ENCODE measurements at regions of chr17 and their contacts with region 1.

Region 1: DNA sequence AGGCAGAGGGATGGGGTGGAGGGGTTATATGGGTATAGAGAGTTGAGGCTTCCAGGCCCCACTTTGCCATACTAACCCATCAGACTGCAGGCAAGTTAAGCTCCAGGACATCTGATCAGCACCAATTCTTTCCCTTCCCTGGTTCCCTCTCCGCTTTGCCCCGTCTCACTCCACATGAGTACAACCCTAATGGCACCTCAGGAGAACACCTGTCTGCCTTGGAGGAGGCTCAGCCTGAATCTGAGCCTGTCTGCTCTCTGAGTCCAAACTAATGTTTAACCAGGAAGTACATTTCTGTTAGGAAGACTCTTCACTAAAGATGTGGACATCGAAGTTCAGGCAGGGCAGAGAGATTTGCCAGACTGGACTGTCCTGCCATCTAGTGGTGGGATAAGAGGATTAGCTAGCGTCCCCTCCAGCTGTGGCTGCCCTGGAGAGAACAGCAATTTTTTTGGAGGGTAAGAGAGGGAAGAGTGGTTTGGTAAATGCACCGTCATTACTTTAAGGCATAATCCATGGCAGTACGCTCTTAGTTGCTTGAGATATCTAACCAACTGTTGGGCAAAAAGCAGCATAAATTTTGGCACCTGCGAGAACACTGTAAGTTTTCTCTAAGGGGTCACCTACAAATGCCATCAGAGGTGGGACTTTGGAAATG is 29.2 kb upstream of the LRRC75A start:
- DNase-seq: peak; percentile 84
- H3K4me3 ChIP-seq: no peak overlapping the region
- H3K27ac ChIP-seq: no peak overlapping the region
- H3K4me1 ChIP-seq: no peaks in the 10 kb centered on the region
- H3K27me3 ChIP-seq: no peaks in the 10 kb centered on the region
- CTCF ChIP-seq: peak; percentile 84

Region 2: DNA sequence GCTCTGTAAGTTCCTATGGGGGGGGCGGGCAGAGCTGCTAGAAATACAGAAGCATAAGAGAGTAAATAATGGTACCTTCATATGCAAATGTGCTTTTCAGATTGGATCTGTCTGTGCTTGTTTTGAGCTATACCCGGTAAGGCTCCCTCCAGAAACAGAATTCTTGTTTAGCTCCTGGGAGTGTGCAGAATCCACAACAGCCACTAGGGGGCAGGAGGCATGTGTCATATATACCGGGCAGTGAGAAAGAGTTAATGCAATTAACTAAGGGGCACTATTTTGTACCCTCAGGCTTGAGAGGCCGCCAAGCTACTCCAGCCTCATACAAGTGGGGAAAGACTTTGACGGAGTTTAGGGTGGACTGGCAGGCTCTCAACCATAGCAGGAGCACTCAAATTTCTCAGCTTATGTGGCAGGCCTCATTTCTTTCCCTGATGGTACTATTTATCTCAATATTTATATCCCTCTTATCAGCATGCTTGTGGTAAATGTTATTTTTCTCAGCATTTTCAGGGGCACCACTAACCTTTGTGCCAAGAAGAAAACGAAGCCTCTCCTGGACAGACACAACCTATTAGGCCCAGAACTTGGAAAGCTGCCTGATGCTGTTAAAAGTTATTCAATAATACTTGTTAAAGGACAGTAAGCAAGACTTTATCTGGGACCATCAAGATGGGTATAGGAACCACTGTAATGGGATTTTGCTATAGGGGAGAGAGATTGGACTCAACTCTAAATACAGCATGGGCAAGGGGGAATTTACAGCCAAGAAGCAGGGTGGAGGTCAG is 157.3 kb before region 1 on chr17:
- intact Hi-C with region 1: loop called (anchors 10 kb)
- DNase-seq: peak; percentile 85
- H3K4me3 ChIP-seq: no peak overlapping the region
- H3K27ac ChIP-seq: no peak overlapping the region
- H3K4me1 ChIP-seq: no peaks in the 10 kb centered on the region
- H3K27me3 ChIP-seq: no peaks in the 10 kb centered on the region
- CTCF ChIP-seq: peak; percentile 90

Region 3: DNA sequence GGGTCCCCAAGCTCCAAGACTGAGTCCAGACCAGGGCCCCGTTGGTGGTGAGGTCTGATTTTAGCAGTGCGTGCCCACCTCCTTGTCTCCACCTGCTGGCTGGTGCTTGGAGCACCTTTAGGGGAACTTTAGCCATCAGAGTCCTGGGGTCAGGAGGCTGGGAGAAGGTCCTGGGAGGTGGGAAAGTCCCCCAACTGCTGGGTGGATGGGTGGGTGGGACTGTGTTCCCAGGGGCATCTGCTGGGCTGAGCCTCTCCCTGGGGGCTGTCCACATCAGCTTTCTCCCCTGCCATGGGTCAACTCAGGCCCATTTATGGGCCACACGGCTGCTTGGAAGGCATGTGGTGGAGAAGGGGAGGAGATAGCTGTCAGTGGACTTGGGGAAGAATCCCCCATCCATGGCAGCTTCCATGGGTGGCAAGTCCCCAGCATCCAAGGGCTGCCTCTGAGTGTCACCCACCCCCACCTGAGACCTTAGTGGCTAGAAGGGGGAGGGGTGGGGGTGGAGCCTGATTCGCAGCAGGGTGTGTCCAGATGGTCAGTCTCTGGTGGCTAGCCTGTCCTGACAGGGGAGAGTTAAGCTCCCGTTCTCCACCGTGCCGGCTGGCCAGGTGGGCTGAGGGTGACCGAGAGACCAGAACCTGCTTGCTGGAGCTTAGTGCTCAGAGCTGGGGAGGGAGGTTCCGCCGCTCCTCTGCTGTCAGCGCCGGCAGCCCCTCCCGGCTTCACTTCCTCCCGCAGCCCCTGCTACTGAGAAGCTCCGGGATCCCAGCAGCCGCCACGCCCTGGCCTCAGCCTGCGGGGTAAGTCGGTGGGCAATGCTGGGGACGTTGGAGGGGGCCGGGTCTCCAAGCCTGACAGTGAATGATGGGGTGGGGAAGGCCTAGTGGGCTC is 105.9 kb before region 1 on chr17 and contains the start of gene TRPV2:
- intact Hi-C with region 1: no loop called
- DNase-seq: peak; percentile 52
- H3K4me3 ChIP-seq: peak within 1 kb of the TSS; percentile 52
- H3K27ac ChIP-seq: peak within 1 kb of the TSS; percentile 84
- H3K4me1 ChIP-seq: peaks cover 5% of the 10 kb centered on the region
- H3K27me3 ChIP-seq: no peaks in the 10 kb centered on the region
- CTCF ChIP-seq: peak; percentile 36
- total RNA-seq, gene TRPV2: 5.4 to 7.4 TPM

Region 4: DNA sequence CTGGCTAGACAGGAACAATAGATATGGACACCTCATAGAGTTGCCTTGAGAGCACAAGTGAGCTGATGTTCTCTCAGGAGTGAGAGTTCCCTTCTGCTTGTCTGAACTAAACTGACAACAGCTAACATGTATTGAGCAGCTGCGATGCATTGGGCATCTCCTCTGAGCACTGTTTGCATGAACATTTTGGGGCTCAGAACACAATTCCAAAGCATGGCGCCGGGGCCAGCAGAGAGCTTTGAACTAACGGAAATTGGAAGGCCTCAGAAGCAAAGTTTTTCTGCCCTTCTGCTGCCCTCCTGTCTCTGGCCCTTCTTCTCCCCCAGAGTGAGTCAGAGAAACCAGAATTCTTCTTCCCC is 67.7 kb before region 1 on chr17:
- intact Hi-C with region 1: loop called (anchors 2 kb)
- DNase-seq: no peak
- H3K4me3 ChIP-seq: no peak overlapping the region
- H3K27ac ChIP-seq: no peak overlapping the region
- H3K4me1 ChIP-seq: no peaks in the 10 kb centered on the region
- H3K27me3 ChIP-seq: no peaks in the 10 kb centered on the region
- CTCF ChIP-seq: peak; percentile 2